Dendritic cell treated with granulocyte-macrophage colony-stimulating factor and Interleukin-4, amounts not matched to agents 40 ng/mL and 50 ng/mL, for 4 days (primary cell): ENCODE measurements at regions of chr3 and their contacts with region 1.

Region 1: DNA sequence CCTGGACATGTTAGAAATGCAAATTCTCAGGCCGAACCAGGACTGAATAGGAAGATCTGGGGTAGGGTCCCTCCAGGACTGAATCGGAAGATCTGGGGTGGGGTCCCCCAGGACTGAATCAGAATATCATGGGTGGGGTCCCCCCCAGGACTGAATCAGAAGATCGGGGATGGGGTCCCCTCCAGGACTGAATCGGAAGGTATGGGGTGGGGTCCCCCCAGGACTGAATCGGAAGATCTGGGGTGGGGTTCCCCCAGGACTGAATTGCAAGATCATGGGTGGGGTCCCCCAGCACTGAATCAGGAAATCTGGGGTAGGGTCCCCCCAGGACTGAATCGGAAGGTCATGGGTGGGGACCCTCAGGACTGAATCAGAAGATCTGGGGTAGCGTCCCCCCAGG is 48.2 kb upstream of the TNK2 start:
- H3K4me3 Mint-ChIP-seq: no peak overlapping the region
- H3K27ac Mint-ChIP-seq: no peak overlapping the region
- H3K4me1 Mint-ChIP-seq: peaks cover 25% of the 10 kb centered on the region
- H3K27me3 Mint-ChIP-seq: peaks cover 7% of the 10 kb centered on the region

Region 2: GRCh38 chr3:195692354-195692685 is 264.3 kb before region 1 on chr3:
- intact Hi-C with region 1: loop called (anchors 5 kb)
- H3K4me3 Mint-ChIP-seq: no peak overlapping the region
- H3K27ac Mint-ChIP-seq: no peak overlapping the region
- H3K4me1 Mint-ChIP-seq: peaks cover 7% of the 10 kb centered on the region
- H3K27me3 Mint-ChIP-seq: no peaks in the 10 kb centered on the region

Region 3: GRCh38 chr3:195839282-195840010 is 117.1 kb before region 1 on chr3:
- intact Hi-C with region 1: no loop called
- H3K4me3 Mint-ChIP-seq: no peak overlapping the region
- H3K27ac Mint-ChIP-seq: no peak overlapping the region
- H3K4me1 Mint-ChIP-seq: no peaks in the 10 kb centered on the region
- H3K27me3 Mint-ChIP-seq: peaks cover 19% of the 10 kb centered on the region

Region 4: DNA sequence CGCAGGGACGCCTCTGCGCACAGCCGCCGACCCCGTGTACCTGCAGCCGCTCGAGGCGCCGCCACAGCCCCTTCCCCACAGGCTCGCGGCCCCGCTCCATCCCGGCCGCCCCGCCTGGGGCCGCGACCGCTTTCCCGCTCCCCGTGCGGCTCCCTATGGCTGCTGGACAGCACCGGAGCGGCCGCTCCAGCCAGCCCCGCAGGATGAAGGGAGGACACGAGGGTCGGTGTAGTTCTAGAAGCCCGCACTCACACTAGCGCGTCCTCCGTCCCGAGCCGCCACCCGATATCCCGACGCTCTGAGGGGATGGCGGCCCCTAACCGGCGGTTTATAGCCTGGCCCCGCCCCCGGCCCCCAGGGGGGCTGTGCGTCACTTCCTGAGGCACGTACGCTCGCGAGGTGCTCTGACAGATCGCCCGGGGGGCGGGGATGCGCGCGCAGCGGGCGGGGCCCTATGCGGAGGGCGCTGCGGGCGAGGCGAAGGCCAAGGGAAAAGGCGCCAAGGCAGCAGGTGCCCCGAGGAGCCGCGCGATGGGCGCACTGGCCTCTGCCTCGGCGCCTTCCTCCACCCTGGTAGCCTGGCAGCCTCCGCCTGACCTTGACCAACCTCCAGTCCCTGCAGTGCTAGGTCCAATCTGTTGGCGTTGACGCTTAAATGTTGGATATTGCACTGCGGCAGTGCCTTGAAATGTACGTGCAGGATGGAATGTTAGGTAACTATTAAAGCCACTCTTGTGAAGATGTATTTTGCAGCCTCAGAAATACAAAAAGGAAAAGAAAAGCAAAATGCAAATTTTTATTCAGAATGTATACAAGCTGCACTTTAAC is 125.4 kb after region 1 on chr3 and contains the start of gene TFRC:
- intact Hi-C with region 1: no loop called
- H3K4me3 Mint-ChIP-seq: peak within 1 kb of the TSS; percentile 91
- H3K27ac Mint-ChIP-seq: peak within 1 kb of the TSS; percentile 93
- H3K4me1 Mint-ChIP-seq: peaks cover 41% of the 10 kb centered on the region
- H3K27me3 Mint-ChIP-seq: peaks cover 2% of the 10 kb centered on the region